ENCODE measurements at regions of chr5 and their contacts with region 1.

Region 1: DNA sequence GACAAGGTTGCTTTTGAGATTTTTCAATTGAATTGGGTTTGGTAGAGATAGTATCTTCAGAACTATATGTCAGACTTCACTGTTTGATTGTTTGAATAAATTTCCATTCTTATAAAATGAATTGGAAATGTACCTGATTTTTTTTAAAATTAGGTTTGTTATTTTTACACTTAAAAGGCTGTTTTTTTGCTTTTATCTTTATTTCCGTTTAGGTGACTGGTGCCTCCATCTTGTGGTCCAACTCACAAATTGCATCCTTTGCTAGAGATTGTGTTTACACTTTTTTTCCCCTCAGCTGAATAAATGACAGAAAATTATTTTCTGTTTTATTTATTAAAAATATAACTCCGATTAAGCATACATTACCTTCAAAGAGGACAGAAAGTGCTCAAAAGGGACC is 15.6 kb downstream of the NDUFAF2 start:
- DNase-seq: no peak
- H3K4me3 ChIP-seq: no peak overlapping the region
- H3K27ac ChIP-seq: no peak overlapping the region
- H3K27me3 ChIP-seq: no peaks in the 10 kb centered on the region
- CTCF ChIP-seq: peak; percentile 71

Region 2: DNA sequence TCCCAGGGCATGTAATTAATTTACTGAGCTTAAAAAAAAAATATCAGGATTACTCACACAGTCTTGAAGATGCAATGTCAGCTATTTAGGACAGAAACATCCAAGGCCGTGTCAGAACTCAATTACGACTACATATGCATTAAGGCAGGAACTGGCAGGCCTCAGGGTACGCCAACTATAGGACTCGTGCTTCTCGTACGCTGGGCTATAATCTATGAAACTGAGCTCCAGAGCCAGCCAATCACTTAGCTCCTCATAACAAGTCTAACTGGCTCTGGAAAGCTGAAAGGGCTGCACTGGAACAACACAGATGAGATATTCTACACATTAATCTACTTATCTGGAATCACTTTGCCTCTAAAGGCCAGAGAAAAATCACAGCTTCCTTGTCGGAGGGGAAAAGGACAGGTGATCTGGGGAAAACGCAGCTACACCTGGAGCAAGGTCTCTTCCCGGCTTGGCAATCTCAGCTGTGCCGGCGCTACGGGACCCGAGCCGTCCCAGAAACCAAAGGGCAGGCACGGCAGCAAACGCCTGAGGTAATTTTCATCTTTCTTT is 472.6 kb before region 1 on chr5:
- CTCF ChIA-PET with region 1: no interaction called
- POLR2A ChIA-PET with region 1: no interaction called
- DNase-seq: no peak
- H3K4me3 ChIP-seq: no peak overlapping the region
- H3K27ac ChIP-seq: no peak overlapping the region
- H3K27me3 ChIP-seq: no peaks in the 10 kb centered on the region
- CTCF ChIP-seq: no peak

Region 3: DNA sequence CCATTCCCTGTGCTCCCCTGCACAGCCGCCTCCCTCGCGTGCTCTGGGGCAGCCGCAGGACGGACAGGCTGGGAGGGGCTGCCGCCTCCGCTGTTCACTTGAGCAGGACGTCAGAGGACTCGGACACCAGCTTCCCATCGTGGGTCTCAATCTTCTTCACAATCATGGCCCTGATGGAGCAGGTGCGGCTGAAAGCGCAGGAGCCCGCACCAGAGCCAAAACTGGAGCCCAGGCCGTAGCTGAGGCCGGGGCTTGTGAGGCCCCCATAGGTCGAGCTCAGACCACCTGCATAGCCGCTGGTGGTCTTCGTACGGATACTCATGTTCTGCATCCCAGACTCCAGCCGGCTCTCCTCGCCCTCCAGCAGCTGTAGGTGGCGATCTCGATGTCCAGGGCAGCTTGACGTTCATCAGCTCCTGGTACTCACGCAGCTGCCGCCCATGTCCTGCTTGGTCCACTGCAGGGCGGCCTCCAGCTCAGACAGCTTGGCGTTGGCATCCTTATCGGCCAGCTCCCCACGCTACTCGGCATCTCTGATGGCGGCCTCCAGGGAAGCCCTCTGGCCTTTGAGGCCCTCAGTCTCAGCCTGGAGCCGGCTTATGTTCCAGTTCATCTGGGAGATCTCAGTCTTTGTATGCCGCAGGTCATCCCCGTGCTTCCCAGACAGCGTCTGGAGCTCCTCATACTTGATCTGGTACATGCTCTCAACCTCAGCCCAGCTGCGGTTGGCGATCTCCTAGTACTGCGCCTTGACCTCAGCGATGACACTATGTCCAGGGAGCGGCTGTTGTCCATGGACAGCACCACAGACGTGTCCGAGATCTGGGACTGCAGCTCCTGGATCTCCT is 216.9 kb before region 1 on chr5:
- CTCF ChIA-PET with region 1: no interaction called
- POLR2A ChIA-PET with region 1: no interaction called
- DNase-seq: no peak
- H3K4me3 ChIP-seq: no peak overlapping the region
- H3K27ac ChIP-seq: no peak overlapping the region
- H3K27me3 ChIP-seq: no peaks in the 10 kb centered on the region
- CTCF ChIP-seq: no peak

Region 4: DNA sequence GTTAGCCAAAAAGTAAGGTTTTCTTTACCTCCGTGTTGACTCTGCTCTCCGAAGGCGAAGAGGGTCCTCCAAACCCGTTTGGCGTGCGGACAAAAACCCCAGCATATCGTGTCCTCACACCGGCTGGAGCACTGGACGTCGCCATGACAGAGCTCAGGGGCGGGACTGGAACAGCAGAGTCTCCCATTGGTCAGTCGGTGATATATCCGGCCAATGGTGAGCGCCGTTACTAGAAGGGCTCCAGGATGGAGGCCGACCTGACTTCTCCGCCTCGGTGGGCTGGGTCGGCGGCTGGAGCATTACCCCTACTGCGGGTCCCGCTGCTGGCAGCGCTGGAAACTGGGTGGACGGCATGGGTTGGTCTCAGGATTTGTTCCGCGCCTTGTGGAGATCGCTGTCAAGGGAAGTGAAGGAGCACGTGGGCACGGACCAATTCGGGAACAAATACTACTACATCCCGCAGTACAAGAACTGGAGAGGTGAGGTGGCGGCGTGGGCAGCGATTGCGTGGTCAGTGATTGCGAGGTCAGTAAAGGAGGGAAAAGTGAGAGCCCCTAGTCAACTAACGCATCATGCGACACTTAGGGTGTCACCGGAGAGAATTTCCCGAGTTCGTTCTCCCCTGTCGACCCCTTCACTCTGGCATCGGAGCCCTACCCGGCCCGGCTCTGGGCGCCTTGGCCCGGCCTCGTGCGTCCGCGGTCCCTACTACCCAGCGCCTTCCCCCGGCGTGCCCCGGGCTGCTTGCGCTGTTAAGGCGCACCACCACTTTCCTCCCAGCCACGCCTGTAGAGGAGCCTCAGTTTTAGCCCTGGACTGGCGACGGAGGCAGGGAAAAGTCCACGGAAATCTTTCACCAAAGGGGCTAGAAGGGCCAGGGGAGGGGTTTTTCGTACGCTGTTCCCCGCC is 15.4 kb before region 1 on chr5 and contains the starts of genes ERCC8 and NDUFAF2:
- CTCF ChIA-PET with region 1: interaction called, 28 read pairs
- POLR2A ChIA-PET with region 1: interaction called, 3 read pairs
- DNase-seq: peak; percentile 74
- H3K4me3 ChIP-seq: peak within 1 kb of the TSS; percentile 96
- H3K27ac ChIP-seq: peak within 1 kb of the TSS; percentile 88
- H3K27me3 ChIP-seq: no peaks in the 10 kb centered on the region
- CTCF ChIP-seq: no peak
- polyA plus RNA-seq, gene ERCC8: 18.7 and 23.9 TPM in 2 replicates
- polyA plus RNA-seq, gene NDUFAF2: 28.6 and 42.0 TPM in 2 replicates

Region 5: DNA sequence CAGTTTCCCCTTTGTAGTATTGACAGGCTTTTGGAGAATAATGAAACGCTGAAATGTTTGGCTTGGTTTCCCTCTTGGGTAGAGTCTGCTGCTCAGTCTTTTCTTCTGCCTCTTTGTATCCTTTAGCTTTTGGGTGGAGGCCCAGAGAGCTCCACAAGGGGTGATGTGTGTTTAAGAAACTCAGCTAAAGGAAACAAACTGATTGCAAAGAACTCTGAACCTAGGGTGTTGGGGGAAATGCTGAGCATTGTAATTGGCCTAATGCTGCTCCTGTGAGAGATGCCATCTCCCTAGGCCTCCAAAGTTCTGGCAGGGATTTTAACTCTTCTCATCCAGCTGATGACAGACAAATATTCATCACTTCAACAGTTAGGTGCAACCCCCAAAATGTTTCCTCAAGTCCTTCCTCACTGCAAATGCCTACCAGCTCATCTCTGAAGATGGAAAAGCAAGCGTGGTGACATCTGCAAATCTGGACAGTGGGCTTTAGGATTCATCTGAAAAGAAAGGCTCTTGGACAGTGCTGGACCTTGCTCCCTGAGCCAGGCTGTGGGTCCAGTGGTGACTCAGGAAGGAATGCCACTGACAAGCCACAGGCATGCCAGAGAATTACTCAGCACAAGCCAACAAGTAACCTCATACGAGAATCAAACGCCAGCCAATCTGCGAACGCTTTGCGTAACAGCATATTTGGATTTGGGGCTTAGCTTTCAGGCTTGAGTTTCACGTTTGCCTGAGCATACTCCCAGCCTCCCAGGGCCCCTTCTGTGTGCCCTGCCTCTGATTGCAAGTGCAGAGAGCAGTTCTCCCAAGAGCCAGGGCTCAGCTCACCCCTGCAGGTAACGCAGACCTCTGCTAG is 341.0 kb after region 1 on chr5:
- CTCF ChIA-PET with region 1: interaction called, 10 read pairs
- POLR2A ChIA-PET with region 1: no interaction called
- DNase-seq: peak; percentile 99
- H3K4me3 ChIP-seq: peak overlapping the region; percentile 47
- H3K27ac ChIP-seq: peak overlapping the region; percentile 92
- H3K27me3 ChIP-seq: no peaks in the 10 kb centered on the region
- CTCF ChIP-seq: peak; percentile 27

Region 6: GRCh38 chr5:61817472-61818326 is 857.1 kb after region 1 on chr5:
- CTCF ChIA-PET with region 1: interaction called, 14 read pairs
- POLR2A ChIA-PET with region 1: no interaction called
- DNase-seq: peak; percentile 11
- H3K4me3 ChIP-seq: no peak overlapping the region
- H3K27ac ChIP-seq: no peak overlapping the region
- H3K27me3 ChIP-seq: no peaks in the 10 kb centered on the region
- CTCF ChIP-seq: peak; percentile 75

Region 7: DNA sequence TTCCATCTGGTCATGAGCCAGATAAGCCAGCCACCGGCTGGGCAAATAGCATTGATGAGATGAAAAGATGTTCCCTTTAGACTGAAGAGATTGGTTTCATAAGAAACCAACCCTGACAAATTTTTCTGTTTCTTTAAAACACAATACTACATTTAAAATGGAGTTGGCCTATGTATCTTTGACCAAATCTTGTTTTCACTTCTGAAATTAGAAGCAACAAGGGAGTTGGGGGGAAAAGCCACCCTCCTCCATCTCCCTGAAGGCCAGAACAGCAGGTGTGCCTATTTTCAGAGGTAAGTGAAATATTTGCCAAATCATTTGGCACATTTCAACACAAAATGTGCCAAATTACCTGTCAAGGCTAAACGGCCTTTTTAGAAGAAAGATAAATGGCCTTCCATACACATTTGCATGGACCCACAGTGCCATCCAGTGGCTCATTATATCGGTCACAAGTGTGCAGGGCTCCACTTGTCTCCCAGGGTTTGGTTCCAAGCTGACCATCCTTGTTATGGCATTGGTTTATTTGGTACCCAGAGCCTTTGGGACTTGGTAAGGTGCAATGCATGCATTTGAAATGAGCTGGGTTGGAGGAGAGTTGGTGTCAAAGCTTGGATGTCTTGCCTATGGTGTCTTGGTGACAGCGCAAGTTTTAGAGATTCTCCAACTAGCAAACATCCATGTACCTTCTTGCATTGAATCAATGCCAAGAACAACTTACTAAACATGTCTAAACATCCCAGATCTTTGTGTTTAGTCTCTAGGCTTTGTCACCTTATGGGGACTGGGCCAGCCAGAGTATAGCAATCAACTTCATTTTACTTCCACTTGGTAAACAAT is 973.4 kb after region 1 on chr5:
- CTCF ChIA-PET with region 1: interaction called, 20 read pairs
- POLR2A ChIA-PET with region 1: no interaction called
- DNase-seq: peak; percentile 1
- H3K4me3 ChIP-seq: no peak overlapping the region
- H3K27ac ChIP-seq: no peak overlapping the region
- H3K27me3 ChIP-seq: no peaks in the 10 kb centered on the region
- CTCF ChIP-seq: peak; percentile 48

Region 8: GRCh38 chr5:62143268-62144229 is 1183.0 kb after region 1 on chr5:
- CTCF ChIA-PET with region 1: interaction called, 15 read pairs
- POLR2A ChIA-PET with region 1: no interaction called
- DNase-seq: no peak
- H3K4me3 ChIP-seq: no peak overlapping the region
- H3K27ac ChIP-seq: no peak overlapping the region
- H3K27me3 ChIP-seq: peaks cover 3% of the 10 kb centered on the region
- CTCF ChIP-seq: peak; percentile 54